Panc1 (cell line): ENCODE measurements at regions of chr7 and their contacts with region 1.

Region 1: GRCh38 chr7:85851571-85852193 is 664.8 kb upstream of the SEMA3D start:
- DNase-seq: no peak
- ATAC-seq: no peak
- H3K4me3 ChIP-seq: no peak overlapping the region
- H3K27ac ChIP-seq: no peak overlapping the region
- H3K4me1 ChIP-seq: no peaks in the 10 kb centered on the region
- H3K27me3 ChIP-seq: no peaks in the 10 kb centered on the region
- CTCF ChIP-seq: peak; percentile 49; the same call in 1 of the 2 replicates

Region 2: DNA sequence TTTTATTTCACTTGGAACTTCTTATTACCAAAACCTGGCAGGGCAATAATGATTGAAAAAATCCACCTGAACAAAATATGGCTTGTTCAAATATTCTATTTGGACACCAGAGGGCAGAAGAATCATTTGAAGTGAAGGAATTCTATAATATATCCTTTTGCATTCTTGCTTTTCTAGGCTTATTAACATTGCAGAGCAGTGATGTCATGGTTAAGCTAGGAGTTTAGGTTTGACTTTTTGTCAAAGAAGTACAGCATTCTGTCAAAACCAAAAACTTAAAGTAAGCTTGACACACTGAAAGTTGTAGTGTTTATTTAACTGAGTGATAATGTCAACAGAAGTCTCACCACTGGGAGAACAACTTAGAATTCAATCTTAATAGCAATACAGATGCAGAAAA is 820.8 kb before region 1 on chr7:
- CTCF ChIA-PET with region 1: no interaction called
- POLR2A ChIA-PET with region 1: no interaction called
- in situ Hi-C with region 1: no loop called
- intact Hi-C with region 1: loop called (anchors 2 kb)
- DNase-seq: no peak
- ATAC-seq: no peak
- H3K4me3 ChIP-seq: no peak overlapping the region
- H3K27ac ChIP-seq: no peak overlapping the region
- H3K4me1 ChIP-seq: peaks cover 8% of the 10 kb centered on the region; the same call in 1 of the 2 replicates
- H3K27me3 ChIP-seq: no peaks in the 10 kb centered on the region
- CTCF ChIP-seq: peak; percentile 61; the same call in 1 of the 2 replicates